Dendritic cell treated with granulocyte-macrophage colony-stimulating factor and Interleukin-4, amounts not matched to agents 40 ng/mL and 50 ng/mL, for 4 days (primary cell): ENCODE measurements at regions of chr16 and their contacts with region 1.

Region 1: GRCh38 chr16:59192551-59193199 is 458.6 kb upstream of the GOT2 start:
- H3K4me3 Mint-ChIP-seq: no peak overlapping the region
- H3K27ac Mint-ChIP-seq: no peak overlapping the region
- H3K4me1 Mint-ChIP-seq: no peaks in the 10 kb centered on the region
- H3K27me3 Mint-ChIP-seq: no peaks in the 10 kb centered on the region

Region 2: DNA sequence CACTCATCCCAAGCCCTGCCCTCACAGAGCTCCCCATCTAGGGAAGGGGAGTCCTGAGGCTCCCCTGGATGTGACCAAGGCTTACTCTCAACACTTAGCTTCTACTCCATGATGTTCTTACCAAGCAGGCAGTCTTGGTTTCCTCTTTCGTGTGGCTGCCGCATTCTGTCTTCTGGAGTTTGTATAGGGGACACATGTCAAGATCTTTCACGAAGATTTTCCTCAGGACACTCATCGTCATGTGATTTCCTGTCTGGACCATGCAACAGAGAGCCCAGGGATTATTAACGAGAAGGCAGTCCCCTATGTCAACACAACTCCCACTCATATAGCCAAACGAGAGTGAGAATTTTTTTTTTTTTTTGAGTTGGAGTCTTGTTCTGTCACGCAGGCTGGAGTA is 908.2 kb before region 1 on chr16:
- intact Hi-C with region 1: no loop called
- H3K4me3 Mint-ChIP-seq: no peak overlapping the region
- H3K27ac Mint-ChIP-seq: no peak overlapping the region
- H3K4me1 Mint-ChIP-seq: no peaks in the 10 kb centered on the region
- H3K27me3 Mint-ChIP-seq: no peaks in the 10 kb centered on the region

Region 3: GRCh38 chr16:58843675-58844074 is 349.0 kb before region 1 on chr16:
- intact Hi-C with region 1: loop called (anchors 10 kb)
- H3K4me3 Mint-ChIP-seq: no peak overlapping the region
- H3K27ac Mint-ChIP-seq: no peak overlapping the region
- H3K4me1 Mint-ChIP-seq: peaks cover 14% of the 10 kb centered on the region
- H3K27me3 Mint-ChIP-seq: no peaks in the 10 kb centered on the region

Region 4: DNA sequence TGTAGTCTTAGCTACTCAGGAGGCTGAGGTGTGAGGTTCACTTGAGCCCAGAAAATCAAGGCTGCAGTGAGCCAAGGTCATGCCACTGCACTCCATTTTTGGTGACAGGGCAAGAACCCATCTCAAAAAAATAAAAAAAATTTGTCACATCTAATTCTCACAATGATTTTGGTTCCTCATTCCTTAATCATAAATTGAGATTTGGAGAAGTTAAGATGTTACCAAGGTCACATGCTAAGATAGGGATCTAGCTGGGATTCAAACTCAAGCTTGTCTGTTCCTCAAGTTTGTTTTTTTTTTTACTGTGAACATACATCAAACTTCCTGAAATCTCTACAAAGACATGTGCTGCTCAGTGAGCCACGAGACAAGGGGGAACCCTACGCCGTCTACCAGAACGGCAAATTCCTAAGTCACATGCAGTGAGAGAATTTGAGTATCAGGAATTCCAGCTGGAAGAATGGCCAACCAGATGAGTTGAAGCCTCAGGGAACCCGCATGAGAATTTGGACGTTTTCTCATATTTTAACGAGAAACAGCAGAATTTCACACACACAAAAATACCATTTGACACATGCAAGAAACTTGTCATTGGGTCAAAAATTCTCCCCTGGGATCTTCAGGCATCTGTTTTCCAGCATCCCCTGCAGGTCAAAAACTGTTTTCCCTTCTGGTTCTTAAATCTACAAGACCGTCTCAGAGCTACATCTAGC is 44.5 kb before region 1 on chr16:
- intact Hi-C with region 1: no loop called
- H3K4me3 Mint-ChIP-seq: no peak overlapping the region
- H3K27ac Mint-ChIP-seq: no peak overlapping the region
- H3K4me1 Mint-ChIP-seq: peaks cover 10% of the 10 kb centered on the region
- H3K27me3 Mint-ChIP-seq: no peaks in the 10 kb centered on the region

Region 5: GRCh38 chr16:59170099-59170712 is 22.5 kb before region 1 on chr16:
- intact Hi-C with region 1: loop called (anchors 1 kb)
- H3K4me3 Mint-ChIP-seq: no peak overlapping the region
- H3K27ac Mint-ChIP-seq: no peak overlapping the region
- H3K4me1 Mint-ChIP-seq: no peaks in the 10 kb centered on the region
- H3K27me3 Mint-ChIP-seq: no peaks in the 10 kb centered on the region